HEK293T (cell line): ENCODE measurements at regions of chr1 and their contacts with region 1.

Region 1: GRCh38 chr1:109548321-109549267 is at the start of gene GNAI3:
- DNase-seq: peak; percentile 97

Region 2: GRCh38 chr1:109142260-109142659 is 406.3 kb before region 1 on chr1:
- CTCF ChIA-PET with region 1: no interaction called
- POLR2A ChIA-PET with region 1: no interaction called
- DNase-seq: no peak

Region 3: DNA sequence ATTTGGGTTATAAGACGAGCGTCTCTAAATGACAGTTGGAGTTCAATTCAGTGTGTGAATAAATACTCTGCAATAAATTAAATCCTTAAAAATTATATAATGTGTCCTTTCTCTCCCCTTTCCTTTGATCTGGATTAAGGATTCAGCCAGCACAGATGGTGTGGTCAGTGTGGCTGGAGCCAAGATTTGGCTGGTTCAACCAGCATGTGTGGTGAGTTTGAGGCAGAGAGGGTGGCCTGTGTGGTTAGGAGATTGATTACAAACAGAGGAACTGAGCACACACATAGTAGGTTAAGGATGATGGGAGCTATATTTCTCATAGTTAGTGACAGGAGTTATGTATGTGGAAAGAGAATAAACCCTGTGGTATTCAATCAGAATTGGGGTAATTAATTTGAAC is 24.9 kb before region 1 on chr1:
- CTCF ChIA-PET with region 1: no interaction called
- POLR2A ChIA-PET with region 1: no interaction called
- DNase-seq: no peak

Region 4: DNA sequence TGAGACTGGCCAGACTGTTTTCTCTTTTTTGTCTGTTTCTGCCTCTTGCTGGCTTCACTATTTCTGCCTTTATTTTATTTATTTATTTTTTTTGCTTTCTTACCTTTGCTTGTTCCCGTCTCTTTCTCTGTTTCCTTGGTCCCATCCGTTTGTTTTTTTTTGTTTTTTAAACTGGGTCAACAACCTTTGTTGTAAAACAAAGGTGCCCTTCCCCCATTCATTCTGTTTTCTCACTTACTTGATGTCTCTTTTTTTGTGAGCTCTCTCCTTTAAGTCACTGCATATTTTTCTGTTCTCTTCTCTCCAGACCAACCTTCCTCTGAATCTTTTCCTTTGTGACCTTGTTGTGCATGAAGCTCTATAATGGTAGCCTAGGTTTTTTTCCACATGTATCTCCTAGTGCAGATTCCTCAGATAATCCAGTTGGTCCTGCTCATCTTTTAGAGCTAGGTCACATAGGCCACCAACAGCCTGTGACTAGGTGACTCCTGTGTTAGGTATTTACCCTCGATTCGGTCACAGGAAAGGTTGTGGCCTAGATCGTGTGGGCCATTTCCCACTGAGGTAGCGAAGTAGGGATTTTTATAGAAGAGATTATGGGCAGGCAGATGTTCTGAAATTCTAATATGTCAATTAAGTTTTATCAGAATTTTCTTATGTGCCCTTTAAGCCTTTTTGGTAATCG is 15.7 kb after region 1 on chr1:
- CTCF ChIA-PET with region 1: interaction called, 4 read pairs
- POLR2A ChIA-PET with region 1: interaction called, 46 read pairs
- DNase-seq: no peak

Region 5: DNA sequence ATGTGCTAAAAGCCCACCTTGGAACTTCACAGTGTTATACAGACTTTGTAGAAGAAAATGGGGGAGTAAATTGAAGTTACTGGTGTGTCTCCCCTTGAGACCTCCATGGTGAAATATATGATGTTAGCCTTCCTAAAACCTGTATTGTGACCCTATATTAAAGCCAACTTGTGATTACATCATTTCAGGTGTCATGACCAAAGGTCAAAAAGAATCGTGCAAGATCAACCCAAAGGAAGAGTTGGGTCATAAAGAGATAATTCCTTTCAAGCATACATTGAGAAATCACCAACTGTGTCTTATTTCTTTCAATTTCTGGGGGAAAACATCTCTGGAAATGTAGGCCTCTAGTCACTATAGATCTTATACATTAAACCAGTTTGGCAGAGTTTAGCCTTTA is 36.2 kb after region 1 on chr1:
- CTCF ChIA-PET with region 1: no interaction called
- POLR2A ChIA-PET with region 1: no interaction called
- DNase-seq: no peak

Region 6: DNA sequence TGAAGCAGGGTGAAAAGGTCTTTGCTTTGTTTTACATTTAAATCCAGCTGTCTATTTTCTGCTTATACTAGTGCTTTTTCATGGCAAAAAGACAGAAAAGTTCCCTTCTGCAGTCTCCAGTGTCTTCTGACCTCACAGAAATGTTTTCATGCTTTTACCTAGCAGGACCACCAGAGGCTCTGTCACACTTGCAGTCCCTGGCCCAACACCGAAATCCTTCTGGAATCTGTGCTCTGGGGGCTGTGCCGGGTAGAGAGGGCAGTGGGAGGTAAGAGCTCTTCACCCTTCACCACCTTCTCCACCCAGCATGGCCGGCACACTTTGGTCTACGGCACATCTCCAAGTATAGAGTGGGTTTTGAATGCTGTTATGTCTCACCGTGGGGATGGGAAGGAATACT is 50.1 kb after region 1 on chr1:
- CTCF ChIA-PET with region 1: interaction called, 6 read pairs
- POLR2A ChIA-PET with region 1: interaction called, 14 read pairs
- DNase-seq: peak; percentile 51

Region 7: GRCh38 chr1:109620841-109621286 is 72.3 kb after region 1 on chr1:
- CTCF ChIA-PET with region 1: interaction called, 6 read pairs
- POLR2A ChIA-PET with region 1: interaction called, 52 read pairs
- DNase-seq: peak; percentile 94

Region 8: GRCh38 chr1:109643385-109644230 is 95.0 kb after region 1 on chr1:
- CTCF ChIA-PET with region 1: interaction called, 42 read pairs
- POLR2A ChIA-PET with region 1: interaction called, 79 read pairs
- DNase-seq: peak; percentile 91

Region 9: DNA sequence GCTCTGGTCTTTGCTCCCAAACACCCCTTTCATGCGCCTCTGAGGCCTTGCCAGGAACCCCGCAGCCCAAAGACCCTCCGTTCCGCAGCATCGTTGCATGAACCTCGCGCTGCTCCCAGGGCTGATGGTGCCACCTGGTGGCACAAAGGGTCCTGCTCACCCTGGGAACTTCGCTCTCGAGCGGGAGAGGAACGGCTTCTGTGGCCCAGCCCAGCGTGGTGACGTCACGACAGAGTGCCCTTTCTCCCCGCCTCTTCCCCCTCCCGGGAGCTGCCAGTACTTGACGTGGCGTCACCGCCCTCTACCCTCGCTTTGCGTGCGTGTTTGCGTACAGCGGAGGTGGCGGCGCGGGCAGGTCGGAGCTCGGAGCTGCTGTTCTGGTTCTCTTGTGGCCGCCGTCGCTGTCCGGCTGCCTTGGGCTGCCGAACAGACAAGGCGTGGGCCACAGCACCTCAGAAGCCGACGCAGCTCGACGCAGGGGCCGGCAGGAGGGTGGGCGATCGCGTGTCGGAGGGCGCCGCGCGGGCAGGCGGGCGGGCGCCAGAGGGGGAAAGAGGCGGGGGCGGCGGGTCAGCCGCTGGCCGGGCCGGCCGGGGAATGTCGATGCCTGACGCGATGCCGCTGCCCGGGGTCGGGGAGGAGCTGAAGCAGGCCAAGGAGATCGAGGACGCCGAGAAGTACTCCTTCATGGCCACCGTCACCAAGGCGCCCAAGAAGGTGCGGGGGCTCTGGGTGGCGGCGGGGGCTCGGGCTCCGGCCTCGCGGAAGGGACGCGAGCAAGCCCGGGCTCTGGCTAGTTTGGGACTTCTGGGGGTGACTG is 436.1 kb after region 1 on chr1 and contains the start of gene AHCYL1:
- CTCF ChIA-PET with region 1: interaction called, 3 read pairs
- POLR2A ChIA-PET with region 1: interaction called, 15 read pairs
- DNase-seq: peak; percentile 100